Activated CD8-positive, alpha-beta T cell treated with anti-CD3 and anti-CD28 coated beads for 36 hours (primary cell): ENCODE measurements at regions of chr2 and their contacts with region 1.

Region 1: GRCh38 chr2:203763938-203764664 is 57.7 kb downstream of the CD28 start:
- DNase-seq: no peak
- ATAC-seq: peak; percentile 93
- H3K4me3 Mint-ChIP-seq: peak overlapping the region; percentile 16
- H3K27ac Mint-ChIP-seq: peak overlapping the region; percentile 93
- H3K4me1 Mint-ChIP-seq: peaks cover 68% of the 10 kb centered on the region
- H3K27me3 Mint-ChIP-seq: no peaks in the 10 kb centered on the region
- CTCF ChIP-seq: no peak

Region 2: DNA sequence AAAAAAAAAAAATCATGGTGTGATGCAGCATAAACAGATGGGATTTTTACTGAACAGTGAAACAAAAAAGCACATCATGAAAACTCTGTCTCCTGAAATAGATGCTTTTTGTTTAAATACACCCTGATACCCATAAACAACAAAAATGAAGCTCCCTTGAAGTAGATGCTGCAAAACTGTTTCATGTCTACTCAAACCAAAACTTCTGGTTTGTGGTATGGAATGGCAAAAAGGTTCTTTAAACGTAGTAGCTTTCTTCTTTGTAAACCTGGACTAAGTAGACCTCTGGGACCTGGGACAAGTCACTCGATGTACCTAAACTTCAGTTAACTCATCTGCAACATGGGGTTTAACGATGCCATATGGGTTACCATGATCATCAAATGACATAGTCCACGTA is 164.6 kb before region 1 on chr2:
- CTCF ChIA-PET with region 1: no interaction called
- POLR2A ChIA-PET with region 1: no interaction called
- intact Hi-C with region 1: no loop called
- DNase-seq: no peak
- ATAC-seq: peak; percentile 51
- H3K4me3 Mint-ChIP-seq: no peak overlapping the region
- H3K27ac Mint-ChIP-seq: no peak overlapping the region
- H3K4me1 Mint-ChIP-seq: peaks cover 17% of the 10 kb centered on the region
- H3K27me3 Mint-ChIP-seq: peaks cover 4% of the 10 kb centered on the region
- CTCF ChIP-seq: no peak

Region 3: DNA sequence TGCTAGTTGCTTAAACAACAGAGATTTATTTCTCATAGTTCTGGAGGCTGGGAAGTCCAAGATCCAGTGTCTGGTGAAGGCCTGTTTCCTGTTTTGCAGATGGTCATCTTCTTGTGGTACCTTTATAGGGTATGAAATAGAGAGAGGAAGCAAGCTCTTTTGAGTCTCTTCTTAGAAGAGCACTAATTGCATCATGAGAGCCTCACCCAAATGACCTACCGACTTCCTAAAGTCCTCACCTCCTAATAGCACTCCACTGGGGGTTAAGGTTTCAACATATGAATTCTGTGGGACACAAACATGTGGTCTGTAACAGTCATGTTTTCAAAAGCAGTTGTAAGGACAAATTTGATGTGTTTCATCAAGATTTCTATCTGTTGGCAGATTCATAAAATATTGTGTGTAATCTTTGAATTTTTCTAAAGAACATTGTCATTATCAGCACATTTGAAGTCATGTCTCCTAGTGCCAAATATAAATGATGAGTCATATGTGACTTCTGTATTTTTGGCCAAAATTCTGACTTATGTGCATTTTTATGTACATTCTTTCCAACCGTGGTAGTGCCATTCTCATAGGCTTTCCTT is 12.3 kb before region 1 on chr2:
- CTCF ChIA-PET with region 1: interaction called, 13 read pairs
- POLR2A ChIA-PET with region 1: interaction called, 50 read pairs
- intact Hi-C with region 1: no loop called
- DNase-seq: no peak
- ATAC-seq: no peak
- H3K4me3 Mint-ChIP-seq: no peak overlapping the region
- H3K27ac Mint-ChIP-seq: peak overlapping the region; percentile 66
- H3K4me1 Mint-ChIP-seq: peaks cover 49% of the 10 kb centered on the region
- H3K27me3 Mint-ChIP-seq: no peaks in the 10 kb centered on the region
- CTCF ChIP-seq: no peak